Activated CD8-positive, alpha-beta T cell treated with anti-CD3 and anti-CD28 coated beads for 36 hours (primary cell): ENCODE measurements at regions of chr12 and their contacts with region 1.

Region 1: DNA sequence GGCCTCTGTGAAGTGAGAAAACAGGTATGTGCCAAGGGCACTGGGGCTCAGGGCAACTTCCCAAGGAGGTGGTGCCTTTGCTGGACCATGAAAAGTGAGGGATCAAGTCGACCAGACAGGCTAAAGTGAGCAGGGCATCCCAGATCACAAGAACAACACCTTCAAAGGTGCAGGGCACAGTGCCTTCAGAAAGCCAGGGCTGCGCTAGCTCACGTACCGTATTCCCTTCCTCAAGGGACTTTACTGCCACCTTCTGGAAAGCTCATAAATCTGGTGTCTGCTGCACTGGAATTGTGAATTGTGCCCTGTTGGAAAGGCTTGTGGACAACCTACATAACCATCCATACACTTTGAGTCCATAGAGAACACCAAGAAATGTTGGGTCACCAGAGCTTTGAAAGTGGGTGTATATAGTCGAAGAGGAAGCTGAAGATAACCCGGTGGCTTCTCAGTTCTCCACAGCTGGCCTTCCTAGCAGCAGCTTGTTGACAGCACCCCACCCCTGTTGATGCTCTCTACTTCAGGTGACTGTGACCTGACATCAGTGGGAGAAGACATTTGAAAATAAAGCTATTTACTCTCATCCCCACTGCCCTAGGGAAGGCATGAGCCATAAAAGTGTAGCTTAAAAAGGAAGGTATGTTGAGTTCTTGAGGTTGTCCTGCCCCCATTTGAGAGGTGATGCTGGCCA is 24.5 kb downstream of the FIGNL2 start:
- DNase-seq: peak; percentile 46
- ATAC-seq: no peak
- H3K4me3 Mint-ChIP-seq: no peak overlapping the region
- H3K27ac Mint-ChIP-seq: no peak overlapping the region
- H3K4me1 Mint-ChIP-seq: peaks cover 36% of the 10 kb centered on the region
- H3K27me3 Mint-ChIP-seq: no peaks in the 10 kb centered on the region
- CTCF ChIP-seq: peak; percentile 48

Region 2: DNA sequence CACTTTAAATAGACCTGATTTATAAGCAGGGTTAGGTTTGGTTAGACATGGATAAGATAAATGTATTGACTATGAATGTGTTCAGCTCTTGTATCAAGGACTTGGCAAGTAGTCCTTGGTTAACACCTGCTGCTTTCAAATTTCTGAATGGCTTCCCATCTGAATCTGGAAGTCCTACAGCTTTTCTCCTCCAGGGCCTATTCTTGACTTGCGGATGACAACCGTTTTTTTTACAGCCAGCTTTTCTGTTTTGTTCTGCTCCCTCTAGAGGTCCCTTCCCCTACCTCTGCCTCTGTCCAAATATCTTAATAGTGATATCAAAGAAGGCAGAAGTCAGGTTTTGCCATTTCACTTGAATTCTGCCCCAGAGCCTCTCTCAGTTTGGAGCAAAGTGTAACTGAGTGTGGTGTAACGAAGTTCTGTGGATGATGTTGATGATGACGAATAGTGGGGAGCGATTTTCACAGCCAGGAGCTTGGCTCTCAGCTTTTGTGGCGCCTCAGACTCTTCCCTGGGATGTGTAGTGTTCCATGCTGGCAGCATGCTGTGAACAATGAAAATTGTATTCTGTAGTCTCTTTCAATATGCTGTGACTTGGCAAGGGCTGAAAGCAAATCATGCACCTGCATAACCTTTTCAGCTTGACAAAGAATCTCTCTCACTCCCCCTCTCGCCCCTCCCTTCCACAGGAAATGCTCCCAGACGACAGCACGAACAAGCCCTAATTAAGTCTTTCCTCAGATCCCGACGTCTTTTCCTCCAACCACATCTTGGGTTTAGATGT is 404.4 kb before region 1 on chr12:
- CTCF ChIA-PET with region 1: interaction called, 17 read pairs
- POLR2A ChIA-PET with region 1: no interaction called
- intact Hi-C with region 1: loop called (anchors 5 kb)
- DNase-seq: no peak
- ATAC-seq: no peak
- H3K4me3 Mint-ChIP-seq: no peak overlapping the region
- H3K27ac Mint-ChIP-seq: no peak overlapping the region
- H3K4me1 Mint-ChIP-seq: peaks cover 7% of the 10 kb centered on the region
- H3K27me3 Mint-ChIP-seq: peaks cover 2% of the 10 kb centered on the region
- CTCF ChIP-seq: no peak

Region 3: DNA sequence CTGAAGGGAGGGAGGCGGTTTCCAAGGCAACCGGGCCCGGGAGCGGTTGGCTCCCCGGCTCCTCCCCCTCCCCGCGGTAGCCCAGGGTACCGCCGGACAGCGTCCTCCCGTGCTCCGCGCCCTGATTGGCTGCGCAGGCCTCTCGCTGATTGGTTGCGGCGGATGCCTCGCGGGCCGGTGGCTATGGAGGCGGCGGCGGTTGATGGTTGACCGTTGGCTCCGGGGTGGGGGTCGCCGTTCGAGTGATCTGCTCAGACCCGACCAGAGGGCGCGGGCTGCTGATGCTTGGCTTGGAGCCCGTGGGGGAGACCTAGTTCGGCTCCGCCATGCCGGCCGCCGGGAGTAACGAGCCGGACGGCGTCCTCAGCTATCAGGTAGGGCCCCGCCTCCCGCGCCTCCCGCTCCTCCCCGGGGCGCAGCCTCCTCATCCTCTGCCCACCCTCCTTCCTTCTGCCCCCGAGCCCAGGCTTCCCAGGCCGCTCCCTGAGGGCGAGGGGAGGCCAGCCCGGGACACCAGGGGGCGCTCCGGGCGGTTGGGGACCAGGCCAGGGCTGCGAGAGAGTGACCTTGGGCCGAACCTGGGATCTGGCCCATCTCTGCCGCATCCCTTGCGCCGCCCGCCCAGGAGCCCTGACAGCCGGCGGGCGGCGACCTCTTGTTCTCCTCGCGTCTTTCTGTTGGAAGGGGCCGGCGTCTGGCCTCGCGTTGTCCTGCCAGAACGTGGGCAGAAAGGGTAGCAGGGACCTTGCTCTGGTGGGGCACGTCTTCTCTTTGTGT is 399.2 kb before region 1 on chr12 and contains the start of gene SLC4A8:
- CTCF ChIA-PET with region 1: interaction called, 17 read pairs
- POLR2A ChIA-PET with region 1: no interaction called
- intact Hi-C with region 1: loop called (anchors 5 kb)
- DNase-seq: peak; percentile 90
- ATAC-seq: peak; percentile 95
- H3K4me3 Mint-ChIP-seq: peak within 1 kb of the TSS; percentile 69
- H3K27ac Mint-ChIP-seq: no peak within 1 kb of the TSS
- H3K4me1 Mint-ChIP-seq: peaks cover 9% of the 10 kb centered on the region
- H3K27me3 Mint-ChIP-seq: no peaks in the 10 kb centered on the region
- CTCF ChIP-seq: peak; percentile 92
- total RNA-seq, gene SLC4A8: 1.1 to 2.7 TPM

Region 4: GRCh38 chr12:51591020-51591901 is 232.8 kb before region 1 on chr12 and contains the start of gene SCN8A:
- CTCF ChIA-PET with region 1: interaction called, 5 read pairs
- POLR2A ChIA-PET with region 1: interaction called, 10 read pairs
- intact Hi-C with region 1: no loop called
- DNase-seq: peak; percentile 63
- ATAC-seq: peak; percentile 60
- H3K4me3 Mint-ChIP-seq: peak within 1 kb of the TSS; percentile 79
- H3K27ac Mint-ChIP-seq: peak within 1 kb of the TSS; percentile 66
- H3K4me1 Mint-ChIP-seq: peaks cover 13% of the 10 kb centered on the region
- H3K27me3 Mint-ChIP-seq: peaks cover 45% of the 10 kb centered on the region
- CTCF ChIP-seq: no peak
- total RNA-seq, gene SCN8A: 0.77 to 0.78 TPM

Region 5: DNA sequence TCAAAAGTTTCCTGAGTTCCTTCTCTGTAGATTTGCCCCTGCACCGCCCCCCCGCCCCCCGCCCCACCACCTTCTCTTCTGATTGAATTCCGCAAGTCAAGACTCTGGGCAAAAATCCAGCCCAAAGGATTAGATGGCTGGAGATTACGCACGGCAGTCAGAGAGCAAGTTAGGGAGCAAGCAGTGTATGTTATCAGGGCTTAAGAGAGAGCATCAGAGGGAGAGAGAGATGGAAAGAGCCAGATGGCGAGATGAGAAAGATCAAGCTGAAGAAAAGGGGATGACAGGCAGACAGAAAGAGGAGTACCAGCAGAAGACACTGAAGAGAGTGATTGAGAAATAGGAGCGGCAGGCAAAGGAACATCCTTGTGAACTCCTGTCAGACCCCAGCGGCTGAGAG is 50.0 kb after region 1 on chr12:
- CTCF ChIA-PET with region 1: interaction called, 17 read pairs
- POLR2A ChIA-PET with region 1: no interaction called
- intact Hi-C with region 1: no loop called
- DNase-seq: no peak
- ATAC-seq: no peak
- H3K4me3 Mint-ChIP-seq: no peak overlapping the region
- H3K27ac Mint-ChIP-seq: no peak overlapping the region
- H3K4me1 Mint-ChIP-seq: peaks cover 11% of the 10 kb centered on the region
- H3K27me3 Mint-ChIP-seq: peaks cover 16% of the 10 kb centered on the region
- CTCF ChIP-seq: no peak